SK-N-SH (cell line): ENCODE measurements at regions of chrX and their contacts with region 1.

Region 1: DNA sequence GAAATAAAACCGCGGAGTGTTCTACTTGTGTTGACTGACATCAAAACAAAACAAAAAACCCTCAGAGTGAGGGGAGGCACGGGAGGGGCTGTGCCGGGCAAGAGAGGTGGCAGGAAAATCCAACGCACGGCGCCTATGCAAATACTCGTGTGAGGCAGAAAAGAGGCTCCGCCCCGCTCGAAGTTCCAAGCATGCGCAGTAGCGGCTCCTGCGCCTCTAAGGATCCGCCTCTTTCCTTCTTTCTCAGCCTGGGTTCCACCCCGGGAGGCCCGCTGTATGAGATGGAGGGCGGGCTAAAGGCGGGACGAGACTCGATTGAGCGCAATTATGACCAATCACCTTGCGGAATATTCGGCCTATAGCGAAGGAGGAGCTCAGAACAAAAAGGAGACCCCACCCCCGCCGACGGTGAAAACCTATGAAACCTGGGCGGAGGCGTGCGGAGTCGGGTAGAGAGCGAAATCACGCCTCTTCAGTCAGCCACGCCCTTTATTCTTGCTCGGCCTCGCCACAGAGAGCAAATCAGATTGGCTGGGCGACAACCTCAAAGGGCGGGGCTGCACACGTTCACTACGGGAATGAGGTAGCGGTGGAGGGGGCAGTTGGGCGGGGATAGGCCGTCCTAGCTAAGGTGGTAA is 720 bp upstream of the CDK16 start:
- DNase-seq: peak; percentile 95
- H3K4me3 ChIP-seq: peak overlapping the region; percentile 88 to 90
- H3K27ac ChIP-seq: peak overlapping the region; percentile 92 to 96
- H3K4me1 ChIP-seq: peaks cover 7 to 30% of the 10 kb centered on the region in 2 experiments; a peak in 3 of 4 replicates
- H3K27me3 ChIP-seq: no peaks in the 10 kb centered on the region
- CTCF ChIP-seq: no peak
- EP300 ChIP-seq: no peak
- RAD21 ChIP-seq: no peak

Region 2: DNA sequence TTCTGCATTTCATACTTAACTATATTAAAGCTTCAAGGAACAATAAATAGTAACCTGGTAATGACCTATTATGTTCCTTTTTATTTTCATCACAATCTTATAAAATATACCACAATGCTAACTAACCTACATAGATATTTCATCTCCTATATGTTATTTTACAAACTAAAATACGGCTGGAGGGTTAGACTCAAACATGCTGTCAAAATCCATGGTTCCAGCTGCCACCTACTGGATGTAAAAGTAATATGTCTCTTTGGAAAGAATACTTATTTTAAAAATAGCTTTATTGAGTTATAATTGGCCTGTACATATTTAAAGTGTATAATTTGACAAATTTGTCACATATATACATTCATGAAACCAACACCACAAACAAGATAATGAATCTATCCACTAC is 124.5 kb before region 1 on chrX:
- CTCF ChIA-PET with region 1: no interaction called
- POLR2A ChIA-PET with region 1: no interaction called
- DNase-seq: peak; percentile 26
- H3K4me3 ChIP-seq: no peak overlapping the region
- H3K27ac ChIP-seq: no peak overlapping the region
- H3K4me1 ChIP-seq: no peaks in the 10 kb centered on the region
- H3K27me3 ChIP-seq: peaks cover 12% of the 10 kb centered on the region; the same call in 1 of the 2 replicates
- CTCF ChIP-seq: peak; percentile 74
- EP300 ChIP-seq: no peak
- RAD21 ChIP-seq: peak; percentile 69

Region 3: DNA sequence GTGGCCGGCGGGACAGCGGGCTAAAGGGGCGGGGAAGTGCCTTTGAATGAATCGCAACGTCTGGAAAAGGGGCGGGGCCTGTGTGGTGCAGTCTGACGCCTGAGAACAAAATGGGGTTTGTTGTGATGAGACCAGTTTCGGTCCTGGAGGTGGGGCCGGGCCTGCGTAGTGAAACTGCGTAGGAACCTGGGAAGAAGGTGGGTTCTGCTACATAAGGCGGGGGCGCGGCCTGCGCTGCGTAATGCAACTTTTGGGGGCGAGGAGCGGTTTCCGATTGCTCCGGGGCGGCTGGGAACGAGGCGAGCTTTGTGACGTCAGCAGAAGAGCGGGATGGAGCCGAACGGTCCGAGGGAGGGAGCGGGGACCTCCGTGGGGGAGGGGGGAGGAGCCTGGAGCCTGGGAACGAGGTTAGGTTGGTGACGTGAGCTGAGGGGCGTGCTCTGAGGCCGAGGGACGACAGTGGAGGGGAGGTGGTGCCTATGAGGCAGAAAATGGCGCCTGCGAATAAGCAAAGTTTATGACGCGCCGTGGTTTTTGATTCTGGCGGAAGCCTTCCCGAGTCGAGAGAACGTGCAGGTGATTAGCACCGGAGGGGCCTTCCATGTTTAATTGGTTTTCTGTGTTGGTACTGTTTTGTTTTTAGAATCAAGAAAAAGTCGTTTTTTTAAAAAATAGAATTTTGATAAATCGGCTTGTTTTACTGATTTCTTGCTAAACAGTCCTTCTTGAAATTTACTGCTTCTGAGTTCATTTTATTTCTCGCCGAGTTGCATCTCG is 15.8 kb after region 1 on chrX:
- CTCF ChIA-PET with region 1: interaction called, 3 read pairs
- POLR2A ChIA-PET with region 1: interaction called, 10 read pairs
- DNase-seq: peak; percentile 92
- H3K4me3 ChIP-seq: peak overlapping the region; percentile 78 to 83
- H3K27ac ChIP-seq: peak overlapping the region; percentile 92 to 97
- H3K4me1 ChIP-seq: peaks cover 0 to 10% of the 10 kb centered on the region in 2 experiments; a peak in 2 of 4 replicates
- H3K27me3 ChIP-seq: no peaks in the 10 kb centered on the region
- CTCF ChIP-seq: no peak
- EP300 ChIP-seq: no peak
- RAD21 ChIP-seq: no peak